ENCODE measurements at regions of chr20 and their contacts with region 1.

Region 1: DNA sequence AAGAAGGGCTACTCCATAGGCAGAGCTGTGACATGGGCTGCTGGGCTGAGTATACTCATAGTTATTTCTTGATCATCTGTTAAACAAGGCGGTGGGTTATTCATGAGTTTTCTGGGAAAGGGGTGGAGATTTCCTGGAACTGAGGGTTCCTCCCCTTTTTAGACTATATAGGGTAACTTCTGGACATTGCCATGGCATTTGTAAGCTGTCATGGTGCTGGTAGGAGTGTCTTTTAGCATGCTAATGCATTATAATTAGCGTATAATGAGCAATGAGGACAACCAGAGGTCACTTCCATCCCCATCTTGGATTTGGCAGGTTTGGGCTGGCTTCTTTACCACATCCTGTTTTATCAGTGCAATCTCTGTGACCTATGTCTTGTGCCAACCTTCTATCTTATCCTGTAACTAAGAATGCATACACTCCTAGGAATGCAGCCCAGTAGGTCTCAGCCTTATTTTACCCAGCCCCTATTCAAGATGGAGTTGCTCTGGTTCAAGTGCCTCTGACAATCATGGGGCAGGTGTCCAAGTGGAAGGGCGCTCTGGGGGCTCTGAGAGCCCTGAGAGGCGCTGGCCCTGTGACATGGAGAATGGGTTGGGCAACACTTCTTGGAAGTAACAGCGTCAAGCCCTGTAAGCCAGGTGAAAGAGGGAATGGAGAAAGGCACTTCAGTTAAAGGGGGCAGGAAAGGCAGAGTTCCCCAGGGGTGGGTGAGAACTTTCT is 354.1 kb upstream of the SULF2 start:
- DNase-seq: peak; percentile 79 to 88
- H3K4me3 ChIP-seq: no peak overlapping the region
- H3K27ac ChIP-seq: peak overlapping the region; percentile 45
- H3K4me1 ChIP-seq: peaks cover 23% of the 10 kb centered on the region
- H3K27me3 ChIP-seq: no peaks in the 10 kb centered on the region
- CTCF ChIP-seq: no peak

Region 2: GRCh38 chr20:47922252-47922651 is 217.2 kb before region 1 on chr20:
- CTCF ChIA-PET with region 1: no interaction called
- POLR2A ChIA-PET with region 1: interaction called, 3 read pairs
- intact Hi-C with region 1: loop called (anchors 5 kb)
- DNase-seq: peak; percentile 49 to 92
- H3K4me3 ChIP-seq: peak overlapping the region; percentile 21; the same call in 1 of the 2 replicates
- H3K27ac ChIP-seq: peak overlapping the region; percentile 88
- H3K4me1 ChIP-seq: peaks cover 56% of the 10 kb centered on the region
- H3K27me3 ChIP-seq: no peaks in the 10 kb centered on the region
- CTCF ChIP-seq: no peak

Region 3: DNA sequence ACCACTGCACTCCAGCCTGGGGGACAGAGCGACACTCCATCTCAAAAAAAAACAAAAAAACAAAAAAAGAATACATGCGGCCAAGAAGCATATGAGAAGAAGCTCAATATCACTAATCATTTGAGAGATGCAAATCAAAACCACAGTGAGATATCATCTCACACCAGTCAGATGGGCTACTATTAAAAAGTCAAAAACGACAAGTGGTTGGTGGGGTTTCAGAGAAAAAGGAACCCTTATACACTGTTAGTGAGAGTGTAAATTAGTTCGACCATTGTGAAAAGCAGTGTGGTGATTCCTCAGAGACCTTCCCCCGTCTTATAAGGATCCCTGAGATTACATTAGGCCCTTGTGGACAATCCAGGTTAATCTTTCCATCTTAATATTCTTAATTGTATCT is 105.9 kb before region 1 on chr20:
- CTCF ChIA-PET with region 1: no interaction called
- POLR2A ChIA-PET with region 1: interaction called, 26 read pairs
- intact Hi-C with region 1: no loop called
- DNase-seq: no peak
- H3K4me3 ChIP-seq: no peak overlapping the region
- H3K27ac ChIP-seq: peak overlapping the region; percentile 59
- H3K4me1 ChIP-seq: peaks cover 18% of the 10 kb centered on the region
- H3K27me3 ChIP-seq: no peaks in the 10 kb centered on the region
- CTCF ChIP-seq: no peak

Region 4: DNA sequence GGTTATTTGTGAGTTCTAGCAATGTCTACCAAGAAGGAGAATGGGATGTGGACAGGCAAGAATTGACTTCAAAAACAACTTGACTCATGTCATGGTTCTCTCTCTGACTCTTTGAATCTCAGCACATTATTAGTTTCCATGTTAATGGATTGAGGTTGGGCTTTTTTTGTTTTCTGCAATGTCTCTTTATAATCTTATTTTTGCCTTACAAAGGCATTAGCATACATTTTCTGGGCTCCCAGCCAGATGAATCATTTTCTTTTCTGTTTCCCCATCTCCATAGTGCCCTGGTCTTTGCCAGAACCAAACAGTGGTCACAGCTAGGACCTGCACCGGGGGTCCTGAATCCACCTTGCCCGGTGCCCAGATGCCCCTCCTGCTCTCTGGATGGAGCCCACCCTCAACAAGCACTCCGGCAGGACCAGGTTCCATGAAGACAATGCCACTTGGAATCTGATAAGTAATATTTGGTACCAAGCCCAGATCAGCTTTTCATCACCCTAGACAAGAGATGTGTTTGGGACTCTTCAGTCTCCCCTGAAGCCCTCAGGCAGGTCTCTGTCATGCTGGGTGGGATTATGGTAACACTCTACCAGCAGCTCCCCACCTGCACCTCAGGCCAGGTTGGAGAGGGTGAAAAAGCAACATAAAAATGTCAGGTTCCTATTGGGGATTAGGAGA is 87.5 kb before region 1 on chr20:
- CTCF ChIA-PET with region 1: no interaction called
- POLR2A ChIA-PET with region 1: interaction called, 4 read pairs
- intact Hi-C with region 1: loop called (anchors 1 kb)
- DNase-seq: peak; percentile 78 to 87
- H3K4me3 ChIP-seq: no peak overlapping the region
- H3K27ac ChIP-seq: peak overlapping the region; percentile 52
- H3K4me1 ChIP-seq: peaks cover 22% of the 10 kb centered on the region
- H3K27me3 ChIP-seq: no peaks in the 10 kb centered on the region
- CTCF ChIP-seq: no peak

Region 5: DNA sequence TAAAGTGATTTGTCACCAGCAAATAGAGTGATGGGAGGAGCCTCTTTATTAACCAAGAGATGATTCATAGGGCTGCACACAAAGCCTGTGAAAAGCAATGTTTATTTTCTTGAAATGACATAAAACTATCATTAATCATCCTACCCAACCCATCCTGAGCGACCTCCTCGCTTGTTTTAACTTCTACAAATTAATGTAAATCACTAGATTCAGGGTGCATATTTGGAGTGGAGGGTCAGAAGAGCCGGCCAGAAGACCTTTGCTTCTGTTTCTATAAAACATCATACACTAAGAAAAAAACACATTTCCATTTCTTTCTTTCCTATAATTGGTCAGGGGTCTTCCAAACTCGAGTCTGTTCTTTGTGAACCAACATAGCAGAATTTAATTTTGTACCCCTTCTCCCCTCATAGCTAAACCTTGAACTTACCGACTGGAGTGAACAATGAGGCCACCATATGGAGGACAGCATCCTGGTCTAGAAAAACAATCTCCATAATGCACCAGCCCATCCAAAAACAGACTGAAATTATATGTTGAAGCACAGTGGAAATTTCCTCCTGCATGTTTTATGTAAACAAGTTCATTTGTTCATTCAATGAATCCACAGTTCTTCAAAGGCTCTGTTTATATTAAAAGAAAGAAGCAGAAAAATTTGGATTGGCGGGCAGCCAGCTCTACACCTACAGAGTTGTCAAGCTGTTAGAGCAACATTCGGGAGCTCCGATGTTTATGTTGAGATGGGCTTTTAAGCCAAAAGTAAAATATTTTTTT is 40.9 kb after region 1 on chr20:
- CTCF ChIA-PET with region 1: no interaction called
- POLR2A ChIA-PET with region 1: no interaction called
- intact Hi-C with region 1: loop called (anchors 1 kb)
- DNase-seq: peak; percentile 50 to 91
- H3K4me3 ChIP-seq: peak overlapping the region; percentile 2; the same call in 1 of the 2 replicates
- H3K27ac ChIP-seq: peak overlapping the region; percentile 84
- H3K4me1 ChIP-seq: peaks cover 45% of the 10 kb centered on the region
- H3K27me3 ChIP-seq: no peaks in the 10 kb centered on the region
- CTCF ChIP-seq: no peak

Region 6: GRCh38 chr20:48374991-48375595 is 235.7 kb after region 1 on chr20:
- CTCF ChIA-PET with region 1: no interaction called
- POLR2A ChIA-PET with region 1: no interaction called
- intact Hi-C with region 1: loop called (anchors 5 kb)
- DNase-seq: peak in 1 of 2 experiments; percentile 60
- H3K4me3 ChIP-seq: peak overlapping the region; percentile 57; the same call in 1 of the 2 replicates
- H3K27ac ChIP-seq: peak overlapping the region; percentile 99
- H3K4me1 ChIP-seq: peaks cover 45% of the 10 kb centered on the region
- H3K27me3 ChIP-seq: no peaks in the 10 kb centered on the region
- CTCF ChIP-seq: no peak

Measured in PC-9 (cell line).